Gastrocnemius medialis (tissue), 4 donors: ENCODE measurements at regions of chr9 and their contacts with region 1.

Region 1: DNA sequence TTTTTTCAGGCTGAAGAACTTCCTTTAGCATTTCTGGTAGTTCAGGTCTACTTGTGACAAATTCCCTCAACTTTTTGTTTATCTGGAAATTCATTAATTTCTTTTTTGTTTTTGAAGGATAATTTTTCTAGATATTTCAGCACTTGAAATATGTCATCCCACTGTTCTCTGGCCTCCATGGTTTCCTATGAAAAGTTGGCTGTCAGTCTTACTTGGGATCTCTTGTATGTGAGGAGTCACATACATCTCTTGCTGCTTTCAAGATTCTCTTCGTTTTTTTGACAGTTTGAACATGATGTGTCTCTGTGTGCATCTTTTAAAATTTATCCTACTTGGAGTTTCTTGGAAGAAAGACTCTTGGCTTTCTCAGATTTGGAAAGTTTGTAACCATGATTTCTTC is 79.5 kb downstream of the RIC1 start:
- DNase-seq: no peak
- ATAC-seq: no peak
- H3K4me3 ChIP-seq: no peak overlapping the region
- H3K27ac ChIP-seq: no peak overlapping the region
- H3K4me1 ChIP-seq: peaks cover 0 to 2% of the 10 kb centered on the region in 2 donors
- H3K27me3 ChIP-seq: no peaks in the 10 kb centered on the region
- CTCF ChIP-seq: no peak
- POLR2A ChIP-seq: no peak

Region 2: DNA sequence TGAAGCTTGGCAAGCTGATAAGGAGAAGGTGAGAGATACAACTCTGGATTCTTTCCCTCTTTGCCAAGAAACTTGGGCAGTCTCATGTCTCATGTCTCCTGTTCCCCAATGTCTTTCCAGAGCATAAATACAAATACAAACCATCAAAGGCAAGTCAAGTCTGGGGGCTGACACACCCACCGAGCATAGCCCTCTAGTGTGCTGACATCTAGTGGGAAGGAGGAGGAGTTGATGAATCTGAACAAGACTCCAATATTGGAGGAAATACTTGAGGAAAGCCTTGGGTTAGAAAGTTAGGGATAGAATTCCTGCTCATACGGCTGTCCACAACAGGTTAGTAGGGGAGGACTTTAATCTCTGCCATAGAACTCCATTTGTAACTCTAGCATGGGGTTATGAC is 190.9 kb after region 1 on chr9:
- in situ Hi-C with region 1: loop called in 1 of 4 experiments (anchors 10 kb)
- intact Hi-C with region 1: no loop called
- DNase-seq: no peak
- ATAC-seq: no peak
- H3K4me3 ChIP-seq: no peak overlapping the region
- H3K27ac ChIP-seq: no peak overlapping the region
- H3K4me1 ChIP-seq: peaks cover 0 to 4% of the 10 kb centered on the region in 2 donors
- H3K27me3 ChIP-seq: no peaks in the 10 kb centered on the region
- CTCF ChIP-seq: no peak
- POLR2A ChIP-seq: no peak